ENCODE measurements at regions of chr16 and their contacts with region 1.

Region 1: DNA sequence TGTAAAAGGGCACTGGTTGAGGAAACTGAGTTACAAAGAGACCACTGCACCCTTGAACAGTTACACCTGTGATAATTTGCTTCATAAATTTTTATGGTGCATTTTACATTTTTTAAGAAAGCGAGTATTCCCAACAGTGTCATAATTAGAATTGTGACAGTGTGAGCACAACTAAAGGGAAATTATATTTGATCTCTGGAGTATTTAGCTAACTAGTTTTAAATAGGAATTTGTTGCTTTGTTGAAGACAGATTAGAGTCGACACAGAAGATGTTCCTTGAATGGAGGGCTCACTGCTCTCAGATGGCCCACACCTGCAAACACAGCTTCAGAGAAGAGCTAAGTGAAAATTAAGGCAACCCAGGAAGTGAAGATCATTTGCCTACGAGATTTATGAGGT is 555.0 kb upstream of the GOT2 start:
- DNase-seq: no peak
- ATAC-seq: no peak

Region 2: GRCh38 chr16:59224401-59224800 is 64.8 kb before region 1 on chr16:
- intact Hi-C with region 1: loop called (anchors 10 kb)
- DNase-seq: no peak
- ATAC-seq: no peak